Right ventricle myocardium superior (tissue), 1 donor: ENCODE measurements at regions of chr1 and their contacts with region 1.

Region 1: GRCh38 chr1:244970661-244971551 is 106.6 kb upstream of the HNRNPU start:
- DNase-seq: peak; percentile 96
- ATAC-seq: peak; percentile 85

Region 2: GRCh38 chr1:244614113-244614836 is 356.6 kb before region 1 on chr1:
- intact Hi-C with region 1: no loop called
- DNase-seq: no peak
- ATAC-seq: no peak

Region 3: DNA sequence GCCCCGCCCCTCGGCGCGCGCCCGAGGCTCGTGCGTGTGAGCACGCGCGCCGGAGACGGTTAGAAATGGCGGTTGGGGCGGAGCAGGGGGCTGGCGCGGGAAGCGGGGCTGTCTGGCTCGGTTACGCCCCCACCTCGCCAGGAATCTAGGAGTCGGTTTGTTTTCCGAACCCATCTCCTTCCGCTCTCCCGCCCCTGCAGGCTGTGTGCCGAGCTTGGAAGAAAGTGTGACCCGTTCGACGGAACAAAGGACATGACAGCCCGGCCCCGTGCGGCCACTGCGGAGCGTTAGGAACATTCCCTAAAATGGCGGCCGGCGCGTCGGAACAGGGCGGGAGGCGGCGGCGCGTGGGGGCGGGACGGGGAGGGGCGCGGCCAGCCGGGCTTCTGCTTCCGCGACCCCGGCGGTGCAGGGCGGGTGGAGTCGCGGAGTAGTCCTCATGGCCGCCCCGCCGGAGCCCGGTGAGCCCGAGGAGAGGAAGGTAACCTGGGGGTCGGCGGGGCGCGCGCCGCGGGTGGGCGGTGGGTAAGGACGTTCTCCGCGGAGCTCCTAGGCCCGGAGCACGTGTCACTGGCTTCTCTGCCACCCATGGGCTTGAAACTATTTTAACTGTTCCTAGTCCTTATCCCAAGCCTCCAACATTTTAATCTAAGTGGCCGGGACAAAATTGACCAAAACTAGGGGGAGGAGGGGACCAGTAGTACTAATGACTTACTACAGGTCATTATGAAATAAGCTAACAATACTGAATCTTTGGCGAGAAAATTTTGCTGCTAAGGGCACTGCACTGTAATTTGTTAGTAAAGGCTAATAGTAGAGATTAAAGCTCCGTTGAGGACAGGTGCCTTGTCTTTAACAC is 135.4 kb before region 1 on chr1 and contains the start of gene COX20:
- intact Hi-C with region 1: loop called (anchors 10 kb)
- DNase-seq: peak; percentile 95
- ATAC-seq: peak; percentile 91
- total RNA-seq, gene COX20: 68.7 TPM

Region 4: DNA sequence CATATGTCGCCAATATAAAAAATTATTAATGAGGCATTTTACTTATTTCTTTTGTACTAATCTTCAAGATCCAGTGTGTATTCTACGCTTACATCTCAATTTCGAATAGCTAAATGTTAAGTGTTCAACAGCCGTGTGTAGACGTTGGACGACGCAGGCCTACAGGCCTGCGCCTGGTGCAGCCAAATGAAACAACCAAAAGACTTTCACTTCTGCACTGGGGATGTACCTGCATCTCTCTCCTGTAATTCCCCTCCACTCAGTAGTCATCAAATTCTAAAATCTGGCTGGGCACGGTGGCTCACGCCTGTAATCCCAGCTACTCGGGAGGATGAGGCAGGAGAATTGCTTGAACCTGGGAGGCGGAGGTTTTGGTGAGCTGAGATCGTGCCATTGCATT is 29.8 kb before region 1 on chr1:
- intact Hi-C with region 1: no loop called
- DNase-seq: no peak
- ATAC-seq: no peak